ENCODE measurements at regions of chr7 and their contacts with region 1.

Region 1: DNA sequence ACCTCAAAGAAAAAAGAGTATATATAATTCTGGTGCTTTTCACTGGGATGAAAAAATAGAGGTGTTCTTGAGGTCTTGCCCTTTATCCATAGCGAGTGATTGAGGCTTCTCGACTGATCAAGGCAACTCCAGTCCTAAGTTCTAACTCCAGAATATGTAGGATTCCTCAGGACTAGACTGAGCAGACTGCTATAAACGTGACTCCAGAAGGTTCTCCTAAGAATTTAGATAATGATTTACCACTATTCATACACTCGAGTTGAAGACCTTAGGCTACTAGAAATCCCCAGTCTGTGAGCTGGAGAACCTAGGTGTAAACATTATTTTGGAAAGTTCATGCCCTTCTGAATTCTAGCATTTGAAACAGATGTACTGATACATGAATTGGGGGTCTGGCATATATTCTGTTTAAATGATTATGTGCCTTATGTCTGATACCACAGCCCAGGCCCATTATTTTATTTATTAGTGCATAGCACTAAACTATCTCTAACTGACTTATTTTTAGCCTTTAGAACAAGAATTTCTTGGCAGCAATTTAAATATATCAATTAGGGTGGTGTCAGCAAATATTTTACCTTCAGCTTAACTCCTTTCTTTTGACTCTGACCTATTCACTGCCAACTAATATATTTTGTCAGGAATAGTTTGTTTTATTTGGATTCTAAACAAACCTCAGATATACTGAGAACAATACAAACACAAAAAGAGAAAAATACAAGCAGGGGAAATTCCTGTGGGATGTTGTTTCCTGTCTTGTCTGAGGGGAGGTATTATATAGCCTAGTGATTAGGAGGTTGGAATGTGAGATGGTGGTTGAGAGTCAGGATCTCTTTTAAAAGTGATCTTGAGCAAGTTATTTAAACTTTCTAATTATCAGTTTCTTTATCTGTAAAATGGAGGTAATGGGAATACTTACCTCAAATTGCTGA is 75.8 kb downstream of the PODXL start:
- DNase-seq: no peak
- H3K4me3 ChIP-seq: no peak overlapping the region
- H3K27ac ChIP-seq: no peak overlapping the region
- H3K4me1 ChIP-seq: no peaks in the 10 kb centered on the region
- H3K27me3 ChIP-seq: no peaks in the 10 kb centered on the region
- CTCF ChIP-seq: no peak

Region 2: GRCh38 chr7:131265227-131265626 is 215.4 kb before region 1 on chr7:
- CTCF ChIA-PET with region 1: interaction called, 15 read pairs
- POLR2A ChIA-PET with region 1: no interaction called
- intact Hi-C with region 1: no loop called
- DNase-seq: no peak
- H3K4me3 ChIP-seq: no peak overlapping the region
- H3K27ac ChIP-seq: no peak overlapping the region
- H3K4me1 ChIP-seq: no peaks in the 10 kb centered on the region
- H3K27me3 ChIP-seq: no peaks in the 10 kb centered on the region
- CTCF ChIP-seq: no peak